MCF 10A (cell line): ENCODE measurements at regions of chr13 and their contacts with region 1.

Region 1: DNA sequence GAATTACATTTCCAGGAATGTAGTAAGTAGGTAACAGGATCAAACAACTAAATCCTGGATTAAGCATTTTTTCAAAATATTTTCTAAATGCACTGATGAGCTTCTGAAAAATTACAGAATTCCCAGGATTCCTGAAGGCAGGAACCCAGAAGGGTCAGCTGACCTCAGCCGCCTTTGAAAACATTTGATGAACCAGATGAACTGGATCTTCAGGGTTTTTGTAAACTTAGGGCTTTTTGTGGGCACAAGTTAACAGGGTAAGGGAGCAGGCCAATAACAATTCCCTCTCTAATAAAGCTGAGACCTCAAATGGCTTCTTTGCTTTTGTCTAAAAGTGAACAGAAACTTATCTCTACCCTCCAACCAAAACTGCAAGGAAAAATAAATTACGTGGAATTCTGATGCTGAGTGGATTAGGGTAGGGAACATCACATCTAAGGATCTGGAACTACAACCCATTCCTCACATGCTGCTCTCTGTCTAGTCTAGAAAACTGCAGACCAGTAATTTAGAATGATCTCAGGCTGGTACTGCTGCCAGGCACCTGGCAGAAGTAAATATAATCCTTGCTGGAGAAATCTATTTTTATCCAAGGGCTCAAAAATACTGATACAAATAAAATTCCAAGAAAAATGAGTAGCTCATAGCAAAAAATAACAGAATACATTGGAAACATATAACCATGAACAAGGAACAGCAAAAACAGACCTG is 48.2 kb upstream of the N4BP2L1 start:
- DNase-seq: no peak
- H3K4me3 Mint-ChIP-seq: no peak overlapping the region
- H3K27ac Mint-ChIP-seq: no peak overlapping the region
- H3K4me1 Mint-ChIP-seq: no peaks in the 10 kb centered on the region
- H3K27me3 Mint-ChIP-seq: no peaks in the 10 kb centered on the region
- CTCF ChIP-seq: no peak

Region 2: DNA sequence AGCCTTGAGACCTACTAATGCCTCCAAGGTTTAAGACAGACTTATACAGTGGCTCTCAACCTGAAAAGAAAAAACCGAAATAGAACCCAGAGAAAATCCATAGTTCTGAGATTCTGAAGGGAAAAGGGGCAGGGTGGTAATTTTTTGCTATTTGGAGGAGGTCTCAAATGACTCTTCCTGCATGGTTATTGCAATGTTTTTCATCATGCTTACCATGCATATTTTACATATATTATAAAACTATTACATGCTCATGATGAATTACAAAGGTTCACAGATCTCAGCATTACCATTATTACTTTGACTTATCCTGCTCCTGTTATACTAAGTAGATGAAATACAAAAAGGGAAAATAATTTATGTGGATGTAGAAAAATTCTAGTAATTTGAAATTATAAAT is 14.9 kb after region 1 on chr13:
- CTCF ChIA-PET with region 1: no interaction called
- POLR2A ChIA-PET with region 1: interaction called, 12 read pairs
- intact Hi-C with region 1: no loop called
- DNase-seq: no peak
- H3K4me3 Mint-ChIP-seq: no peak overlapping the region
- H3K27ac Mint-ChIP-seq: no peak overlapping the region
- H3K4me1 Mint-ChIP-seq: no peaks in the 10 kb centered on the region
- H3K27me3 Mint-ChIP-seq: no peaks in the 10 kb centered on the region
- CTCF ChIP-seq: no peak